ENCODE measurements at regions of chr7 and their contacts with region 1.

Region 1: GRCh38 chr7:16645593-16646471 is at the starts of genes ANKMY2 and BZW2:
- DNase-seq: peak; percentile 93 to 96 (median 95)
- H3K4me3 ChIP-seq: peak within 1 kb of the TSS; percentile 89 to 96
- H3K4me3 Mint-ChIP-seq: peak within 1 kb of the TSS; percentile 97 to 100 (median 100)
- H3K27ac ChIP-seq: peak within 1 kb of the TSS; percentile 74
- H3K27ac Mint-ChIP-seq: peak within 1 kb of the TSS; percentile 94 to 99 (median 99)
- H3K4me1 ChIP-seq: peaks cover 49% of the 10 kb centered on the region
- H3K4me1 Mint-ChIP-seq: peaks cover 41 to 69% (median 53%) of the 10 kb centered on the region in 4 donors
- H3K27me3 ChIP-seq: no peaks in the 10 kb centered on the region
- H3K27me3 Mint-ChIP-seq: no peaks in the 10 kb centered on the region
- total RNA-seq, gene ANKMY2: 13.6 to 20.3 TPM
- total RNA-seq, gene BZW2: 18.6 to 18.7 TPM

Region 2: GRCh38 chr7:16420649-16421332 is 225.0 kb before region 1 on chr7:
- CTCF ChIA-PET with region 1: no interaction called
- POLR2A ChIA-PET with region 1: interaction called, 21 read pairs
- intact Hi-C with region 1: loop called (anchors 1 kb)
- DNase-seq: peak; percentile 87 to 89 (median 88)
- H3K4me3 ChIP-seq: peak overlapping the region; percentile 50 to 63
- H3K4me3 Mint-ChIP-seq: peak overlapping the region; percentile 81 to 94 (median 88)
- H3K27ac ChIP-seq: peak overlapping the region; percentile 64
- H3K27ac Mint-ChIP-seq: peak overlapping the region; percentile 82 to 97 (median 95)
- H3K4me1 ChIP-seq: peaks cover 15% of the 10 kb centered on the region
- H3K4me1 Mint-ChIP-seq: peaks cover 10 to 32% (median 21%) of the 10 kb centered on the region in 4 donors
- H3K27me3 ChIP-seq: no peaks in the 10 kb centered on the region
- H3K27me3 Mint-ChIP-seq: peaks cover 0 to 8% of the 10 kb centered on the region in 2 donors

Region 3: GRCh38 chr7:16594061-16594460 is 51.8 kb before region 1 on chr7:
- CTCF ChIA-PET with region 1: no interaction called
- POLR2A ChIA-PET with region 1: no interaction called
- intact Hi-C with region 1: no loop called
- DNase-seq: no peak
- H3K4me3 ChIP-seq: no peak overlapping the region
- H3K4me3 Mint-ChIP-seq: no peak overlapping the region
- H3K27ac ChIP-seq: no peak overlapping the region
- H3K27ac Mint-ChIP-seq: no peak overlapping the region
- H3K4me1 ChIP-seq: no peaks in the 10 kb centered on the region
- H3K4me1 Mint-ChIP-seq: no peaks in the 10 kb centered on the region
- H3K27me3 ChIP-seq: no peaks in the 10 kb centered on the region
- H3K27me3 Mint-ChIP-seq: no peaks in the 10 kb centered on the region

Region 4: DNA sequence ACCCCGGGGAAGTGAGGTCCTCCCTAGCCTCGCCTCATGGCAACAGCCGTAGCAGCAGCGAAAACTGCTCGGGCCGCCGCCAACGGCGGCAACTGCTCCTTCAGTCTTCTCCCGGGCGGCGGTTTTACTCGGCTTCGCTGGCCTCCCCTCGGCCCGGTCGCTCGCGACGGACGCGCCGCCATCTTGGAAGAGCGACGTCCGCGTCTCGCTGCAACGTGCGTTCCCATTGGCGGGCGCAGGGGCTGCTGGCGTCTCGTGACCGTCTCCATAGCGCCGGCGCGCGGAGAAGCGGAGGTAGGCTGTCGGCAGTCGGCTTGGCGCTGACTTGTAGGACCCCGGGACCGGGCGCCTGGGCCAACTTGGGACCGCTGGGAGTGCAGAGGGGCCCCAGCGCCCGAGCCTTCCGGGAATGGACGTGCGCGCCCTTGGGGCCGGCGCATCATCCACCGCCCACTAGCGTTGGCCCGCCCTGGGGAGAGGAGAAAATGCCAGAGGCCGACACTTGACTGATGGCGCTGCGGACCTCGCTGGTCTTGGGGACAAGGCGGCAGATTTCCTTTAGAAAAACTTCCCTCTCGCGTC is 1294.6 kb after region 1 on chr7 and contains the start of gene SNX13:
- CTCF ChIA-PET with region 1: no interaction called
- POLR2A ChIA-PET with region 1: no interaction called
- intact Hi-C with region 1: loop called (anchors 5 kb)
- DNase-seq: peak; percentile 86 to 91 (median 88)
- H3K4me3 ChIP-seq: peak within 1 kb of the TSS; percentile 82 to 85
- H3K4me3 Mint-ChIP-seq: peak within 1 kb of the TSS; percentile 89 to 99 (median 97)
- H3K27ac ChIP-seq: peak within 1 kb of the TSS; percentile 90
- H3K27ac Mint-ChIP-seq: peak within 1 kb of the TSS; percentile 89 to 99 (median 99)
- H3K4me1 ChIP-seq: peaks cover 39% of the 10 kb centered on the region
- H3K4me1 Mint-ChIP-seq: peaks cover 29 to 59% (median 43%) of the 10 kb centered on the region in 4 donors
- H3K27me3 ChIP-seq: no peaks in the 10 kb centered on the region
- H3K27me3 Mint-ChIP-seq: no peaks in the 10 kb centered on the region
- total RNA-seq, gene SNX13: 34.6 to 36.0 TPM